A549 (cell line): ENCODE measurements at regions of chr5 and their contacts with region 1.

Region 1: GRCh38 chr5:72366324-72366976 is 46.3 kb downstream of the PTCD2 start:
- DNase-seq: peak; percentile 52 to 76
- ATAC-seq: peak; percentile 94 to 95
- H3K4me3 ChIP-seq: no peak overlapping the region
- H3K27ac ChIP-seq: peak overlapping the region; percentile 59 to 81
- H3K4me1 ChIP-seq: peaks cover 29% of the 10 kb centered on the region
- CTCF ChIP-seq: peak; percentile 89
- EP300 ChIP-seq: no peak
- POLR2A ChIP-seq: no peak
- RAD21 ChIP-seq: peak; percentile 91 to 93

Region 2: DNA sequence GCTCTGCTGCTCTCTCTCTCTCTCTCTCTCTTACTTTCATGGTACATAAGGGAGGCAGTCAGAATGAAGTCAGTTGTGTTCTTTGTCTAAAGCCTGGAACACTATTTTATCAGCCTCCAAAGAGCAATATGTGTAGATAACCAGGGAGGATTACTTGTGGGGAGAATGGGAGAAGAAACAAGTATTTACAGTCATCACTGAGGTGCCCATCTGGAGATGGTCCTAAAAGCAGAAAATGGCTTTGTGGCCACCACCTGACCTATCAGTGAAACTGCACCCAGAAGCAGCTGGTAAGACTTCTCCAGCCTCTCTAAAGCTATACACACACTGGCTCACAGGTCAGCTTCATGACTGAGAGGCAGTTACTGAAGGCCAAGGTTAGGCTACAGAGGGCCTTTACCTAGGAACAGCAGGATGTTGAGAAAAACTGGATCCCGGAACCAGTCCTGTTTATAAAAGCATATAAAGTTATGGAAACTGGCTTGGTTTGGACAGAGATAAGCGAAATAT is 121.5 kb before region 1 on chr5:
- CTCF ChIA-PET with region 1: no interaction called
- POLR2A ChIA-PET with region 1: no interaction called
- DNase-seq: peak; percentile 19 to 70
- ATAC-seq: peak; percentile 90 to 92
- H3K4me3 ChIP-seq: no peak overlapping the region
- H3K27ac ChIP-seq: 0 out of 6 replicates have a peak overlapping the region, but pooled peaks of 1 of the 2 experiments have one; percentile 12
- H3K4me1 ChIP-seq: peaks cover 52% of the 10 kb centered on the region
- CTCF ChIP-seq: peak; percentile 47; the same call in 2 of the 3 replicates
- EP300 ChIP-seq: no peak
- POLR2A ChIP-seq: no peak
- RAD21 ChIP-seq: peak; percentile 52 to 55

Region 3: GRCh38 chr5:72355706-72356299 is 10.6 kb before region 1 on chr5:
- CTCF ChIA-PET with region 1: interaction called, 31 read pairs
- POLR2A ChIA-PET with region 1: no interaction called
- DNase-seq: peak; percentile 26 to 50
- ATAC-seq: peak; percentile 89 to 94
- H3K4me3 ChIP-seq: no peak overlapping the region
- H3K27ac ChIP-seq: peak overlapping the region in 1 of 2 experiments; percentile 29; a peak in 2 of 6 replicates
- H3K4me1 ChIP-seq: peaks cover 15% of the 10 kb centered on the region
- CTCF ChIP-seq: peak; percentile 60
- EP300 ChIP-seq: no peak
- POLR2A ChIP-seq: no peak
- RAD21 ChIP-seq: peak; percentile 67 to 74

Region 4: GRCh38 chr5:72387985-72388384 is 21.5 kb after region 1 on chr5:
- CTCF ChIA-PET with region 1: interaction called, 13 read pairs
- POLR2A ChIA-PET with region 1: no interaction called
- DNase-seq: peak; percentile 68 to 69
- ATAC-seq: peak; percentile 62 to 73; a peak in 4 of 6 replicates
- H3K4me3 ChIP-seq: no peak overlapping the region
- H3K27ac ChIP-seq: peak overlapping the region; percentile 69 to 87
- H3K4me1 ChIP-seq: peaks cover 49% of the 10 kb centered on the region
- CTCF ChIP-seq: no peak
- EP300 ChIP-seq: peak in 1 of 2 experiments; percentile 61; a peak in 1 of 5 replicates
- POLR2A ChIP-seq: no peak
- RAD21 ChIP-seq: no peak

Region 5: GRCh38 chr5:72518001-72518683 is 151.7 kb after region 1 on chr5:
- CTCF ChIA-PET with region 1: interaction called, 34 read pairs
- POLR2A ChIA-PET with region 1: no interaction called
- DNase-seq: no peak
- ATAC-seq: no peak
- H3K4me3 ChIP-seq: no peak overlapping the region
- H3K27ac ChIP-seq: no peak overlapping the region
- H3K4me1 ChIP-seq: no peaks in the 10 kb centered on the region
- CTCF ChIP-seq: no peak
- EP300 ChIP-seq: no peak
- POLR2A ChIP-seq: no peak
- RAD21 ChIP-seq: no peak

Region 6: DNA sequence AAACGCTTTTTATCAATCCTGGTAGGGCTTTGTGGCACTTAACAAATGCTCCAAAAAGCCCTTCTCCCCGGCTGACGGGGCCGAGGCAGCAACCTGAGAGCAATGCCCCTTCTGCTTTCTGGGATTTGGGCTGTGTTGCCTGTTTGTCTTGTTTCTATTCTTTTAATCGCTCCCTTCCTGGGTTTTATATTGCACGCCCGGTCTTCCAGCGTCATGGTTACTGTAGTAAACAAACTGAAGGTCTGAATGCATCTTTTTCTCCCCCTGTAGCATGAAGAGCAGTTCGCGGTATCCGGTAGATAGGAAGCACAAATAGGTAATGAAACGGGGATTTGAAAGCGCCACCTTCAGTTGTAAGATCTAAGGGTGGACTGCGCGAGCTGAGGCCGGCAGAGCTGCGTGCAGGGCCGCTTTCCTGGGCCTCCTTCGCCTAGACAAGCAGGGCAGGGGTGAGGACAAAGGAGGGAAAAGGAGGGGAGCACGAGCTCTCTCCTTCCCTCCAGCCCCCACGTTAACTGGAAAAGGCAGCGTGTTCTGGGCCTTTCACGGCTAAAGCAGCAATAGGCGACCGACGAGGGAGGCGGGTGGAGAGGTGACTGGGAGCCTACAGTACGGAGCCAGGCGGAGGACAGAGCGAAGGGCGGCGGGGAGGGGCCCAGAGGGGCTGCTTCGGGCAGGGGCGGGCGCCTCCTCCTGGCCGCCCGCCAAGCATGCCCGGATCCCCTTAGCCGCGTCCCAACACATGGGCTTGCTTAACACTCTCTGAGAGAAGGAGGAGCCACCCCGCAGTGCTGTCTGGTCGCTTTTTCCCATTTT is 190.1 kb after region 1 on chr5:
- CTCF ChIA-PET with region 1: interaction called, 24 read pairs
- POLR2A ChIA-PET with region 1: no interaction called
- DNase-seq: peak; percentile 45 to 72
- ATAC-seq: peak; percentile 92 to 93
- H3K4me3 ChIP-seq: peak overlapping the region; percentile 39
- H3K27ac ChIP-seq: peak overlapping the region; percentile 87 to 97
- H3K4me1 ChIP-seq: peaks cover 15% of the 10 kb centered on the region
- CTCF ChIP-seq: peak; percentile 54
- EP300 ChIP-seq: no peak
- POLR2A ChIP-seq: peak; percentile 57
- RAD21 ChIP-seq: peak; percentile 41 to 60

Region 7: GRCh38 chr5:72760259-72760658 is 393.8 kb after region 1 on chr5:
- CTCF ChIA-PET with region 1: no interaction called
- POLR2A ChIA-PET with region 1: no interaction called
- DNase-seq: no peak
- ATAC-seq: peak in 1 of 2 experiments; percentile 32; a peak in 1 of 6 replicates
- H3K4me3 ChIP-seq: no peak overlapping the region
- H3K27ac ChIP-seq: no peak overlapping the region
- H3K4me1 ChIP-seq: no peaks in the 10 kb centered on the region
- CTCF ChIP-seq: no peak
- EP300 ChIP-seq: no peak
- POLR2A ChIP-seq: no peak
- RAD21 ChIP-seq: no peak